ENCODE measurements at regions of chr6 and their contacts with region 1.

Region 1: DNA sequence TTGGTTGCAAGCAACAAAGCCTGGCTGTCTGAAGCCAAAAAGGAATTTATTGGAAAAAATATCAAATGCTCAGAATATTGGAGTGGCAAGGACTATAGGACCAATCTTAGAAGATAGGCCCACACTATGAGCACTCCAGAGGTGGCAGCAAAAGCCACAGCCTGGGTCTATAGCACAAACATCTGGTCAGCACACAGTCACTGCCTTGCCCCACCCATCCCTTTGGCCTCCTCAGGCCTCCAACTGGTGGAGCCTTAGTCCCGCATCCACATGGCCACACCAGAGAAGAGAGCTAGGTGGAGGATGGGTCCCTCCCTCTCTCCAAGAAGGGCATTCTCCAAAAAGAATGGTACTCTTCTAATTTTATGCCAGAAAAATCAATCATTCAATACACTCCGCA is 14.0 kb downstream of the NUDT3 start:
- DNase-seq: no peak
- H3K4me3 Mint-ChIP-seq: no peak overlapping the region
- H3K27ac Mint-ChIP-seq: no peak overlapping the region
- H3K4me1 Mint-ChIP-seq: peaks cover 9% of the 10 kb centered on the region
- H3K27me3 Mint-ChIP-seq: no peaks in the 10 kb centered on the region

Region 2: GRCh38 chr6:34338811-34339210 is 39.7 kb before region 1 on chr6:
- intact Hi-C with region 1: loop called (anchors 5 kb)
- DNase-seq: no peak
- H3K4me3 Mint-ChIP-seq: no peak overlapping the region
- H3K27ac Mint-ChIP-seq: no peak overlapping the region
- H3K4me1 Mint-ChIP-seq: peaks cover 18% of the 10 kb centered on the region
- H3K27me3 Mint-ChIP-seq: no peaks in the 10 kb centered on the region

Region 3: GRCh38 chr6:34506718-34507117 is 128.2 kb after region 1 on chr6:
- intact Hi-C with region 1: no loop called
- DNase-seq: no peak
- H3K4me3 Mint-ChIP-seq: no peak overlapping the region
- H3K27ac Mint-ChIP-seq: no peak overlapping the region
- H3K4me1 Mint-ChIP-seq: no peaks in the 10 kb centered on the region
- H3K27me3 Mint-ChIP-seq: peaks cover 7% of the 10 kb centered on the region

Measured in activated T-helper 2 cell treated with anti-CD3 and anti-CD28 coated beads, Interferon-gamma antibody, Interleukin-2, Interleukin-4, amounts not matched to agents 10 μg/mL and 5 μg/mL and 100 μg/mL, durations not matched to agents 14 hours and 24 hours and 36 hours (primary cell).